Sigmoid colon (tissue), 7 donors: ENCODE measurements at regions of chr5 and their contacts with region 1.

Region 1: DNA sequence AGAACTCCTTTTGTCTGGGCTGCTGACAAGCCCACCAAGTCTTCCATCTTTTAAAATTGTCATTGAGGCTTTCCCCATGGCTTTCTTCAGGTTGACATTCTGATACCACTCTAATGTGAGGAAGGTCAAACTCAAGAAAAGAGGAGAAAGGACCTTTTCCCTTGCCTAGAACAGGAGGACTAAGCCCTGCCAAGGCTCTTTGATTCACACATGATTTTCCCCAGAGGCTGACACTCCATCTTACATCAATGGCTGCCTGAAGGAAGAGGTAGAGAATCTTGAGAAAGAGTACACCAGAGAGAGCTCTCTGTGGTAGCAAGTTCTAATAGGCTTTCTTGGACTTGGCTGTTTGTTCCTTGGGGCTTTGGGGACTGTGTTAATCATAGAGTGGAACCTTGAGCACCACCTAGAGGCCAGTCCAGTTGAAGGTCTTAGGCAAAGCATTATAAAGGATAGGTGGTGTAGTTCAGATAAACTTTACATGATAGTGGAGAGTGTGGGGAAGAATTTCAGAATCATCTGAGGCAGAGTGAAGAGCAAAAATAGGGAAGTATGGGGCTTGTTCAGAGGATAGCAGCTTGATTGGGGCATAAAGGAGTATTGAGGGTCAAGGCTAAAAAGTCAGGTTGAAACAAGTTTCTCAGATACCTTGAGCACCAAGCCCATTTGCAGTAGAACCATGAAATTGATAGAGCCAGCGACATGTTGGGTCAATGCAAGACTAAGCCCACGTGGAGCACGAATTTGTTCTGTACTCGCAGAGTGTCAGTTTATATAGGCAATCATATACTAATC is 36.7 kb downstream of the NDFIP1 start:
- DNase-seq: peak; percentile 69
- H3K4me3 ChIP-seq: no peak overlapping the region
- H3K27ac ChIP-seq: no peak overlapping the region
- H3K4me1 ChIP-seq: no peaks in the 10 kb centered on the region
- H3K27me3 ChIP-seq: no peaks in the 10 kb centered on the region
- CTCF ChIP-seq: peak in 3 of 4 experiments; percentile 47 to 64 (median 58)
- EP300 ChIP-seq: no peak
- POLR2A ChIP-seq: no peak

Region 2: DNA sequence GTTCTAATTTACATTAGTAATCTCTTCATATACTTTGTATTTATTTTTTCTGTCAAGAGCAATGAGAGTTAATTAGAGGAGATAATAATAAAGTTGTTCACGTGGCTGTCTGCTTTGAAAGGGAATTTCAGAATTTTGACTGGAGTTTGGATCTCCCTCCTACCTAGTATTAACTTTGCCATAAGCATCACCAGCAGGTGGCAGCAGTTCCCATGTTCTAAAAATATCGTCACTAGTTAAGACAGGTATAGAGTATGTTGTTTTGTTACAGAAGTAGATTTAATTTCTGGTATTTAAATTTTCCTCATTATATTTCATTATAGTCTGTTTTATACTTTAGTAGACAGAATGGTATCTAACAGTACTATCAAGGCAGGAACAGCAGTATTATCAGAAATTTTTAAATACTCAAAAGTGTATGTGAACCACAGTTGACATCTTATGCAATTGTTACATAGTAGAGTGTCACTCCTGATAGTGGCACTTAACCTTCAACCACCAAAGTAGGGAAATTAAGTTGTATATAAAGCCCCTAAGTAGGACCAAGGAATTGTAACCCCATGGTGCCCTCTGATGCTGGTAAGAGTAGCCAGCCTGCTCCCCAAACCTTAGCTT is 152.8 kb before region 1 on chr5:
- intact Hi-C with region 1: loop called (anchors 2 kb)
- DNase-seq: peak; percentile 83
- H3K4me3 ChIP-seq: no peak overlapping the region
- H3K27ac ChIP-seq: peak overlapping the region in 1 of 4 donors; percentile 21
- H3K4me1 ChIP-seq: peaks cover 0 to 5% (median 0%) of the 10 kb centered on the region in 4 donors
- H3K27me3 ChIP-seq: no peaks in the 10 kb centered on the region
- CTCF ChIP-seq: peak; percentile 34 to 80 (median 59)
- EP300 ChIP-seq: no peak
- POLR2A ChIP-seq: no peak

Region 3: DNA sequence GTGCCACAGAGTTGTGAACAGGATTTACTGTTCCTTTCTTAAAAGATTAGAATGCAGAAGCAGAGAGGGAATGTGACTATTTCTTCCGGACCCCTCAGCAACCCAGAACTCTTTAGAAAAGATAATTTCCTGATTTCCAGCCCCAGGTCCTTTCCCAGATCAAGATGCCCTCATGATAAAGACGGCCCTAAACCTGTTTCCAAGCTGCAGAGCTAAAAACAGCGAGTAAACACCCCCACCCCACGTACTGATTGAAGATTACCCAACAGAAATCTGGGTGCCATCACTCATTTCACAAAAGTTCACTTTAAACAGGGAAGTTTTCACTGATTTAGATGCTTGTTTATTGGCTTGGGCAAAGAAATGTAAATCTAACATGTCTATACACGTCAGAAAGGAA is 141.3 kb before region 1 on chr5:
- intact Hi-C with region 1: no loop called
- DNase-seq: no peak
- H3K4me3 ChIP-seq: no peak overlapping the region
- H3K27ac ChIP-seq: no peak overlapping the region
- H3K4me1 ChIP-seq: no peaks in the 10 kb centered on the region
- H3K27me3 ChIP-seq: no peaks in the 10 kb centered on the region
- CTCF ChIP-seq: no peak
- EP300 ChIP-seq: no peak
- POLR2A ChIP-seq: no peak

Region 4: GRCh38 chr5:142108432-142109330 is 36.6 kb before region 1 on chr5 and contains the start of gene NDFIP1:
- intact Hi-C with region 1: loop called (anchors 5 kb)
- DNase-seq: peak; percentile 91
- H3K4me3 ChIP-seq: peak within 1 kb of the TSS; percentile 60 to 77 (median 71)
- H3K27ac ChIP-seq: peak within 1 kb of the TSS; percentile 96 to 97 (median 96)
- H3K4me1 ChIP-seq: peaks cover 0 to 29% (median 18%) of the 10 kb centered on the region in 4 donors
- H3K27me3 ChIP-seq: no peaks in the 10 kb centered on the region
- CTCF ChIP-seq: peak in 1 of 4 experiments; percentile 21
- EP300 ChIP-seq: no peak
- POLR2A ChIP-seq: peak; percentile 43 to 51
- total RNA-seq, gene NDFIP1: 47.8 to 88.5 (median 64.0) TPM